ENCODE measurements at regions of chr15 and their contacts with region 1.

Region 1: DNA sequence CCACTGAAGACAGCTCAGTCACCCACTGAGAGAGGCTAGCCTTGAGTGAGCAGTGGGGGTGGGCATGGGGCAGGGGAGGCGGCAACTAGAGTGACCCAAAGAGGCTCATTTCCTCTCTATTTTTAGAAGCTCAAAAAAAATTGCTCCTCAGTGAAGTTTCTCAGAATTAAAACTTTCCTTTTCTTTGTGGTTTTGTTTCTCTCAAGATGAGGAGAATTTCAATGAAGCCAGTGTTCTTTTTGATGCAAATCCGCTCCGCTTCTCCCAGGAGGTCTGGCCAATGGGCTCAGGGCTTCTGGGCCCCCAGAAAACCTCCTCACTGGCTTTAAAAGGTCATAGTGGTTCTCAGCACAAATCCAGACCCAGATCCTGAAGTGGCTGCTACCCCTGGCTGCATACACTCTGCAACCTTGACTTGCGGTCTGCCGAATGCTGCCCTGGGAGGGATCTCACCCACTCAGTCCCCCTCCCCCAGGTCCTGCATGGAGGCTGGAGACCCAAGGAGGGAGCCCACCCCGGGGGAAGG is at the start of gene ACSBG1:
- DNase-seq: no peak
- ATAC-seq: no peak
- H3K4me3 ChIP-seq: no peak within 1 kb of the TSS
- H3K27ac ChIP-seq: no peak within 1 kb of the TSS
- H3K4me1 ChIP-seq: no peaks in the 10 kb centered on the region
- H3K27me3 ChIP-seq: no peaks in the 10 kb centered on the region
- CTCF ChIP-seq: no peak
- POLR2A ChIP-seq: no peak
- total RNA-seq, gene ACSBG1: 1.9 TPM in 1 of 4 donors, not detected in the others

Region 2: GRCh38 chr15:77329202-77329601 is 905.4 kb before region 1 on chr15:
- in situ Hi-C with region 1: no loop called
- intact Hi-C with region 1: no loop called
- DNase-seq: no peak
- ATAC-seq: no peak
- H3K4me3 ChIP-seq: no peak overlapping the region
- H3K27ac ChIP-seq: no peak overlapping the region
- H3K4me1 ChIP-seq: peaks cover 5 to 10% of the 10 kb centered on the region in 2 donors
- H3K27me3 ChIP-seq: no peaks in the 10 kb centered on the region
- CTCF ChIP-seq: no peak
- POLR2A ChIP-seq: no peak

Region 3: GRCh38 chr15:78177447-78177873 is 57.1 kb before region 1 on chr15:
- in situ Hi-C with region 1: loop called in 2 of 4 experiments (anchors 5 to 10 kb)
- intact Hi-C with region 1: no loop called
- DNase-seq: peak in 1 of 2 donors; percentile 33
- ATAC-seq: no peak
- H3K4me3 ChIP-seq: no peak overlapping the region
- H3K27ac ChIP-seq: no peak overlapping the region
- H3K4me1 ChIP-seq: peaks cover 0 to 2% of the 10 kb centered on the region in 2 donors
- H3K27me3 ChIP-seq: no peaks in the 10 kb centered on the region
- CTCF ChIP-seq: peak; percentile 59 to 80 (median 64)
- POLR2A ChIP-seq: no peak

Region 4: DNA sequence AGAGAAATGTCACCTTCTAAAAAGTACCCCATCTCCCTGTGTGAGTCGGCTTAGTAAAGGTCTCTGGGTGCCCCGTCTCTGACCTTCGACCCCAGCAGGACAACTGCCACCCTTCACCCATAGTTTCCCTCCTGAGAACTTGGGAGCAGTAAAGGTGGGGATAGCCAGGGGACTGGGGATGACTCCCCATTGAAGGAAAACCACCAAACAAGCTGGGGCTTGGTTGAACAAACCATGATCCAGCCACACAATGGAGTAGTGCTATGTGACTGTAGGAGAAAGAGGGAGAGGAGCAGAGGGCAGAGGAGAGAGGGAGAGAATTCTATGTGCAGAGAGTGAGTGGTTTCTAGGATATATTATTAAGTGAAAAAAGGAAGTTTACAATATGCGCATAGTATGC is 51.8 kb before region 1 on chr15:
- in situ Hi-C with region 1: loop called in 2 of 4 experiments (anchors 5 to 10 kb)
- intact Hi-C with region 1: no loop called
- DNase-seq: no peak
- ATAC-seq: no peak
- H3K4me3 ChIP-seq: no peak overlapping the region
- H3K27ac ChIP-seq: no peak overlapping the region
- H3K4me1 ChIP-seq: peaks cover 0 to 2% of the 10 kb centered on the region in 2 donors
- H3K27me3 ChIP-seq: no peaks in the 10 kb centered on the region
- CTCF ChIP-seq: no peak
- POLR2A ChIP-seq: no peak

Region 5: GRCh38 chr15:78204351-78205309 is 29.9 kb before region 1 on chr15:
- in situ Hi-C with region 1: no loop called
- intact Hi-C with region 1: loop called (anchors 5 kb)
- DNase-seq: peak; percentile 52 to 71
- ATAC-seq: peak; percentile 83 to 87
- H3K4me3 ChIP-seq: no peak overlapping the region
- H3K27ac ChIP-seq: peak overlapping the region; percentile 71 to 80 (median 78)
- H3K4me1 ChIP-seq: peaks cover 48 to 53% of the 10 kb centered on the region in 2 donors
- H3K27me3 ChIP-seq: no peaks in the 10 kb centered on the region
- CTCF ChIP-seq: no peak
- POLR2A ChIP-seq: no peak

Region 6: GRCh38 chr15:78340231-78341056 is 105.9 kb after region 1 on chr15 and contains the start of gene CRABP1:
- in situ Hi-C with region 1: no loop called
- intact Hi-C with region 1: no loop called
- DNase-seq: no peak
- ATAC-seq: no peak
- H3K4me3 ChIP-seq: peak within 1 kb of the TSS in 1 of 4 donors; percentile 10
- H3K27ac ChIP-seq: no peak within 1 kb of the TSS
- H3K4me1 ChIP-seq: peaks cover 7 to 8% of the 10 kb centered on the region in 2 donors
- H3K27me3 ChIP-seq: peaks cover 43 to 53% (median 44%) of the 10 kb centered on the region in 3 donors
- CTCF ChIP-seq: no peak
- POLR2A ChIP-seq: no peak
- total RNA-seq, gene CRABP1: not detected